ENCODE measurements at regions of chr10 and their contacts with region 1.

Region 1: GRCh38 chr10:122122493-122122892 is 133.5 kb downstream of the TACC2 start:
- DNase-seq: no peak
- H3K4me3 ChIP-seq: no peak overlapping the region
- H3K27ac ChIP-seq: no peak overlapping the region
- H3K4me1 ChIP-seq: peaks cover 14% of the 10 kb centered on the region
- H3K27me3 ChIP-seq: no peaks in the 10 kb centered on the region
- CTCF ChIP-seq: no peak

Region 2: DNA sequence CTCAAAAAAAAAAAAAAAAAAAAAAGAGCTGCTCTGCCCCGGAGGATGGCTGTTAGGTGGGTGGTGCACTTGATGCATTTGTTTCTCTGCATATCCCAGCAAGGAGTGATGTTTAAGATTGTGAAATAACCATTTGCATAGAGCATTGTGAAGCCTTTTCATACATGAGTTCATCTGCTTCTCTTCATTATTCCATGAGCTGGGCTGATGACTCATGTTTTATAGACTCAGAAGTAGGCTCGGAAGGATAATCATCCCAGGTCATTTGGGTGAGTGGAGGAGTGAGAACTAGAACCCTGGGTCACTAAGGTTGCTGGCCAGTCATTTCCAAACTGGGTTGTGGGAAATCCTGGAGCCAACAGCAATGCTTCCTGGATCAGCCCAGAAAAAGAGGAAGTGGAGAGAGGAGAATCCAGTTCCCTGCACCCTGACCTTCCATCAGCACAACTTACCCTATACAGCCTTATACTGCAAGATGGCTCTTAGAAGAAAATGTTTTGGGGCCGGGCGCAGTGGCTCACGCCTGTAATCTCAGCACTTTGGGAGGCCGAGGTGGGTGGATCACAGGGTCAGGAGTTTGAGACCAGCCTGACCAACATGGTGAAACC is 88.2 kb before region 1 on chr10:
- CTCF ChIA-PET with region 1: interaction called, 14 read pairs
- POLR2A ChIA-PET with region 1: no interaction called
- intact Hi-C with region 1: no loop called
- DNase-seq: peak in 1 of 2 experiments; percentile 72
- H3K4me3 ChIP-seq: no peak overlapping the region
- H3K27ac ChIP-seq: no peak overlapping the region
- H3K4me1 ChIP-seq: peaks cover 8% of the 10 kb centered on the region
- H3K27me3 ChIP-seq: no peaks in the 10 kb centered on the region
- CTCF ChIP-seq: no peak

Measured in PC-9 (cell line).